ENCODE measurements at regions of chr13 and their contacts with region 1.

Region 1: GRCh38 chr13:27374650-27375049 is 49.8 kb upstream of the GTF3A start:
- DNase-seq: peak; percentile 46 to 56 (median 49)
- H3K4me3 ChIP-seq: no peak overlapping the region
- H3K4me3 Mint-ChIP-seq: no peak overlapping the region
- H3K27ac ChIP-seq: no peak overlapping the region
- H3K27ac Mint-ChIP-seq: no peak overlapping the region
- H3K4me1 ChIP-seq: no peaks in the 10 kb centered on the region
- H3K4me1 Mint-ChIP-seq: peaks cover 2 to 10% (median 5%) of the 10 kb centered on the region in 4 donors
- H3K27me3 ChIP-seq: no peaks in the 10 kb centered on the region
- H3K27me3 Mint-ChIP-seq: peaks cover 12 to 22% of the 10 kb centered on the region in 2 donors

Region 2: GRCh38 chr13:27712421-27712820 is 337.8 kb after region 1 on chr13:
- CTCF ChIA-PET with region 1: interaction called, 4 read pairs
- POLR2A ChIA-PET with region 1: no interaction called
- intact Hi-C with region 1: loop called (anchors 1 kb)
- DNase-seq: peak in 3 of 5 donors; percentile 13 to 22 (median 17)
- H3K4me3 ChIP-seq: no peak overlapping the region
- H3K4me3 Mint-ChIP-seq: no peak overlapping the region
- H3K27ac ChIP-seq: no peak overlapping the region
- H3K27ac Mint-ChIP-seq: no peak overlapping the region
- H3K4me1 ChIP-seq: no peaks in the 10 kb centered on the region
- H3K4me1 Mint-ChIP-seq: no peaks in the 10 kb centered on the region
- H3K27me3 ChIP-seq: no peaks in the 10 kb centered on the region
- H3K27me3 Mint-ChIP-seq: peaks cover 13 to 19% of the 10 kb centered on the region in 2 donors

Region 3: GRCh38 chr13:27953676-27954405 is 579.2 kb after region 1 on chr13:
- CTCF ChIA-PET with region 1: no interaction called
- POLR2A ChIA-PET with region 1: no interaction called
- intact Hi-C with region 1: loop called (anchors 1 kb)
- DNase-seq: peak in 4 of 5 donors; percentile 42 to 52 (median 46)
- H3K4me3 ChIP-seq: peak overlapping the region in 1 of 2 donors; percentile 32
- H3K4me3 Mint-ChIP-seq: peak overlapping the region; percentile 58 to 82 (median 74)
- H3K27ac ChIP-seq: no peak overlapping the region
- H3K27ac Mint-ChIP-seq: no peak overlapping the region
- H3K4me1 ChIP-seq: peaks cover 6% of the 10 kb centered on the region
- H3K4me1 Mint-ChIP-seq: peaks cover 0 to 16% (median 10%) of the 10 kb centered on the region in 4 donors
- H3K27me3 ChIP-seq: peaks cover 45% of the 10 kb centered on the region
- H3K27me3 Mint-ChIP-seq: peaks cover 41 to 51% of the 10 kb centered on the region in 2 donors

Region 4: GRCh38 chr13:27977476-27978300 is 603.0 kb after region 1 on chr13:
- CTCF ChIA-PET with region 1: interaction called, 45 read pairs
- POLR2A ChIA-PET with region 1: no interaction called
- intact Hi-C with region 1: no loop called
- DNase-seq: no peak
- H3K4me3 ChIP-seq: no peak overlapping the region
- H3K4me3 Mint-ChIP-seq: peak overlapping the region in 2 of 8 donors; percentile 54 to 71
- H3K27ac ChIP-seq: no peak overlapping the region
- H3K27ac Mint-ChIP-seq: no peak overlapping the region
- H3K4me1 ChIP-seq: peaks cover 11% of the 10 kb centered on the region
- H3K4me1 Mint-ChIP-seq: peaks cover 9 to 42% (median 21%) of the 10 kb centered on the region in 4 donors
- H3K27me3 ChIP-seq: peaks cover 19% of the 10 kb centered on the region
- H3K27me3 Mint-ChIP-seq: peaks cover 68 to 74% of the 10 kb centered on the region in 2 donors

Measured in CD4-positive, alpha-beta memory T cell (primary cell).